ENCODE measurements at regions of chr3 and their contacts with region 1.

Region 1: DNA sequence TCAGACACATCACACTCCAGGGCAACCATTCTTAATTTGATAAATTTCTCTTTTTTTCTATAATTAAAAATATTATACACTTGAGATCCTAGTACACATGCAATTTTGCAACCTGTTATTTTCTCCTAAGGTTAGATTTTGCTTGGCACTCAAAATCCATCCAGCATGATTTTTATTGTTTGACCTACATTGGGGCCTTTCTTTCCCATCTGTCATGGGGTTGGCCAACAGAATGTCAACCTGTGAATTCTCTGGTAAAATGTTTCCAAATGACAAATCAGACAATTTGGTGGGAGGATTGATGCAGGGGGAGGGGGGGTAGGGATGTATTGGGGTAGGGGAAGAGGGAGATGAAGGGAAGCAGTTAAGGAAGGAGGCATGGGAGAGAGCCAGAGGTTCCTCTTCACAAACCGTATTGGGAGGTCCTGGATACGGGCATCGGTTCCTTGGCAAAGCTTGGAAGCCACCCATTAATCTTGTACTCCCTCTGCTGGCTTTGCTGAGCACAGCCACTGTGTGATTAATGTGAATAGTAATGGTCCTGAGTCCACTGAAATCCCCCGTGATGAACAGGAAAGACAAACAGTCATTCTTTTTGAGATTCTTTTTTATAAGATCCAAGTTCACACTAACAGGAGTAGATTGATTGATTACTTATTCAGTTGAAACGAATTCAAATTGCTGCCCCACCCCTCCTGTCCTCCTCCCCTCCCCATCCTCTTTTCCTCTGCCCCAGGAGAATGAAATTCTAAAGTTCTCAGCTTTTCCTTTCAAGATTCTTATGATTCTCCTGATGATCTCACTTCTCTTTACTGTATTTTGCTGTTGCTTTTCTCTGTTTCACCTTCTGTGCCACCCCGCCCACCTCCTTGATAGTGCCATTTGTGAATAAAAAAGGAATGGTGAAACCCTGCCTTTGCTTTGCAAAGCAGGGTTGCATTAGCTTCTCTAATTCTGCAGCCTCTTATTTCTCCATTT is 82.2 kb upstream of the SLC25A26 start:
- DNase-seq: peak; percentile 68
- ATAC-seq: peak; percentile 94
- H3K4me3 ChIP-seq: no peak overlapping the region
- H3K27ac ChIP-seq: no peak overlapping the region
- H3K4me1 ChIP-seq: peaks cover 0 to 14% of the 10 kb centered on the region in 2 experiments; a peak in 1 of 4 replicates
- H3K27me3 ChIP-seq: no peaks in the 10 kb centered on the region
- CTCF ChIP-seq: peak; percentile 75 to 81 (median 78)
- POLR2A ChIP-seq: no peak
- RAD21 ChIP-seq: peak; percentile 93

Region 2: GRCh38 chr3:65385805-65386204 is 752.8 kb before region 1 on chr3:
- CTCF ChIA-PET with region 1: no interaction called
- POLR2A ChIA-PET with region 1: no interaction called
- RAD21 ChIA-PET with region 1: no interaction called
- intact Hi-C with region 1: no loop called
- DNase-seq: no peak
- ATAC-seq: no peak
- H3K4me3 ChIP-seq: no peak overlapping the region
- H3K27ac ChIP-seq: no peak overlapping the region
- H3K4me1 ChIP-seq: no peaks in the 10 kb centered on the region
- H3K27me3 ChIP-seq: no peaks in the 10 kb centered on the region
- CTCF ChIP-seq: no peak
- POLR2A ChIP-seq: no peak
- RAD21 ChIP-seq: no peak

Region 3: DNA sequence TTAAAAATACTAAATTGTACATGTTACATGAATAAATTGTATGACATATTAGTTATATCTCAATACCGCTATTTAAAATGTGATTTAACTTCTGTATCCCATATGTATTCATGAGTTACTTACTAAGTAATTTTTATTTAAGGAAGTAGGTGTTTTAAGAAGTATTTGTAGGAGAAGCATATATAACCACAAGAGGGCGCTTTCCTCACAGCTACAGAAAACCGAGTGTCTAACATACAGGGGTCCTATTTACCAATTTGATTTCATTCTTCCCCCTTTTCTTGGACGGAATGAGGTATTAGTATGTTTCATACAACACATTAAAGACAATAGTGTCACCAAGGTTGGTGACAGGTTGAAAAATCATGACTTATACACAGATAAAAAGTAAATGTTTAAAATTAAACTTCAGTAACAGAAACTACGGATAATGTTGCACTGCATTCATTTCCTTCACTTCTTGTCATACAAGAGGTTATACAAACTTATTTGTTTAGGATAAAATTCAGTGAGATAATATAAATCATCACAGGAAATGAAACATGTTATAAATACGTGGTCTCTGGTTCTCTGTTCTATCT is 353.5 kb before region 1 on chr3:
- CTCF ChIA-PET with region 1: interaction called, 4 read pairs
- POLR2A ChIA-PET with region 1: no interaction called
- RAD21 ChIA-PET with region 1: no interaction called
- intact Hi-C with region 1: loop called (anchors 1 kb)
- DNase-seq: peak; percentile 32
- ATAC-seq: peak; percentile 70
- H3K4me3 ChIP-seq: no peak overlapping the region
- H3K27ac ChIP-seq: no peak overlapping the region
- H3K4me1 ChIP-seq: peaks cover 0 to 3% of the 10 kb centered on the region in 2 experiments; a peak in 1 of 4 replicates
- H3K27me3 ChIP-seq: no peaks in the 10 kb centered on the region
- CTCF ChIP-seq: peak; percentile 60 to 89 (median 66); a peak in 5 of 6 replicates
- POLR2A ChIP-seq: no peak
- RAD21 ChIP-seq: peak; percentile 90

Region 4: GRCh38 chr3:65914740-65915367 is 223.8 kb before region 1 on chr3:
- CTCF ChIA-PET with region 1: no interaction called
- POLR2A ChIA-PET with region 1: no interaction called
- RAD21 ChIA-PET with region 1: no interaction called
- intact Hi-C with region 1: loop called (anchors 10 kb)
- DNase-seq: no peak
- ATAC-seq: peak; percentile 68
- H3K4me3 ChIP-seq: no peak overlapping the region
- H3K27ac ChIP-seq: no peak overlapping the region
- H3K4me1 ChIP-seq: peaks cover 0 to 12% of the 10 kb centered on the region in 2 experiments; a peak in 2 of 4 replicates
- H3K27me3 ChIP-seq: no peaks in the 10 kb centered on the region
- CTCF ChIP-seq: peak in 2 of 3 experiments; percentile 25 to 43; a peak in 2 of 6 replicates
- POLR2A ChIP-seq: no peak
- RAD21 ChIP-seq: peak; percentile 34; the same call in 1 of the 2 replicates